CD4-positive, alpha-beta T cell (primary cell): ENCODE measurements at regions of chr7 and their contacts with region 1.

Region 1: GRCh38 chr7:93231799-93232672 is at the start of gene VPS50:
- DNase-seq: peak; percentile 84 to 97 (median 88)
- ATAC-seq: peak; percentile 94
- H3K4me3 ChIP-seq: peak within 1 kb of the TSS; percentile 67
- H3K4me3 Mint-ChIP-seq: peak within 1 kb of the TSS; percentile 96
- H3K27ac ChIP-seq: peak within 1 kb of the TSS; percentile 79 to 91
- H3K27ac Mint-ChIP-seq: peak within 1 kb of the TSS; percentile 95
- H3K4me1 ChIP-seq: peaks cover 6% of the 10 kb centered on the region
- H3K4me1 Mint-ChIP-seq: peaks cover 25% of the 10 kb centered on the region
- H3K27me3 ChIP-seq: no peaks in the 10 kb centered on the region
- H3K27me3 Mint-ChIP-seq: no peaks in the 10 kb centered on the region
- CTCF ChIP-seq: no peak
- total RNA-seq, gene VPS50: 13.2 to 17.3 TPM

Region 2: DNA sequence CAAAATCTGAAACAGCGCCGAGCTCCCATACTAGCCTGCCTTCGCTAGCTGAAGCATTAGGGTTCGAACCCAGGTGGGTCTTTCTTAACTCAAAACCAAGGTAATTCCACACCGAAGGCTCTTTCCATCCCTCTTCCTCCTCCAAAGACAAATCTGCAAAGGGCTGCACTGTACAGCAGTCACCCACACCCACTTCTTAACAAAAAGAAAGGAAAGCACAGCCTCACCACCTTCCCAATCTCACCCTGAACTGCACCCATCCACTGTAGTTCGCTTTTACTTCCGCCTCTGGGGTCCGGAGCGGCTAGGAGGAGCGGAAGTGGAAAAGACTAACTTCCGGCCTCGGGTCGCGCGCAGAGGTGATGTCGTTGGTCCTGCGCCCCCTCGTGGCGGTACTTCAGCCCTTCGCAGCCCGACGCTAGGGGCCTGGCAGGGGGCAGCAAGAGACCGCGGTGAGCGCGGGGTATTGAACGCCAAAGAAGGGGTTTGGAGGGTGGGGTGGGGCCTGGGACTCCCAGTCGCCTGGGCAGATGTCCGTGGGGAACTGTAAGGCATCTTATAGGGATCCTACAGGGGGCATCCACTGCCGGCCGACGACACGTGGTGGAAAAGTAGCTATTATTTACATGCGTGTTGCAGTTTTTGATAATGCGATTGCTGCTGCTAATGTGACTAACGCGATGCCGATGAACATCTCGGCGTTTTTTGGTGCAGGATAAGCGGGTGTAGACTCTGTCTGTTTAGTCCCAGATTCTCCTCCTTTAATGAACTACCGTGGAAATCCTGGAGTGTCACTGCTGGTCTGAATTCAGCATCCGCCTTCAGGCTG is 1351.4 kb before region 1 on chr7 and contains the start of gene MTERF1:
- CTCF ChIA-PET with region 1: no interaction called
- POLR2A ChIA-PET with region 1: no interaction called
- intact Hi-C with region 1: loop called in 1 of 2 experiments (anchors 10 kb)
- DNase-seq: peak; percentile 88 to 97 (median 92)
- ATAC-seq: peak; percentile 95
- H3K4me3 ChIP-seq: peak within 1 kb of the TSS; percentile 78
- H3K4me3 Mint-ChIP-seq: peak within 1 kb of the TSS; percentile 96
- H3K27ac ChIP-seq: peak within 1 kb of the TSS; percentile 26 to 64
- H3K27ac Mint-ChIP-seq: peak within 1 kb of the TSS; percentile 87
- H3K4me1 ChIP-seq: peaks cover 20% of the 10 kb centered on the region
- H3K4me1 Mint-ChIP-seq: peaks cover 41% of the 10 kb centered on the region
- H3K27me3 ChIP-seq: no peaks in the 10 kb centered on the region
- H3K27me3 Mint-ChIP-seq: no peaks in the 10 kb centered on the region
- CTCF ChIP-seq: peak; percentile 98
- total RNA-seq, gene MTERF1: 11.0 to 11.9 TPM

Region 3: GRCh38 chr7:92245487-92246362 is 986.3 kb before region 1 on chr7 and contains the starts of genes ANKIB1 and KRIT1:
- CTCF ChIA-PET with region 1: no interaction called
- POLR2A ChIA-PET with region 1: interaction called, 9 read pairs
- intact Hi-C with region 1: loop called in 1 of 2 experiments (anchors 10 kb)
- DNase-seq: peak; percentile 76 to 93 (median 81)
- ATAC-seq: peak; percentile 78
- H3K4me3 ChIP-seq: peak within 1 kb of the TSS; percentile 87
- H3K4me3 Mint-ChIP-seq: peak within 1 kb of the TSS; percentile 97
- H3K27ac ChIP-seq: peak within 1 kb of the TSS; percentile 86 to 96
- H3K27ac Mint-ChIP-seq: peak within 1 kb of the TSS; percentile 99
- H3K4me1 ChIP-seq: peaks cover 17% of the 10 kb centered on the region
- H3K4me1 Mint-ChIP-seq: peaks cover 61% of the 10 kb centered on the region
- H3K27me3 ChIP-seq: no peaks in the 10 kb centered on the region
- H3K27me3 Mint-ChIP-seq: no peaks in the 10 kb centered on the region
- CTCF ChIP-seq: no peak
- total RNA-seq, gene ANKIB1: 60.0 to 66.9 TPM
- total RNA-seq, gene KRIT1: 28.6 to 28.7 TPM

Region 4: GRCh38 chr7:92534572-92534971 is 697.5 kb before region 1 on chr7:
- CTCF ChIA-PET with region 1: no interaction called
- POLR2A ChIA-PET with region 1: no interaction called
- intact Hi-C with region 1: loop called in 1 of 2 experiments (anchors 5 kb)
- DNase-seq: no peak
- ATAC-seq: no peak
- H3K4me3 ChIP-seq: no peak overlapping the region
- H3K4me3 Mint-ChIP-seq: no peak overlapping the region
- H3K27ac ChIP-seq: no peak overlapping the region
- H3K27ac Mint-ChIP-seq: no peak overlapping the region
- H3K4me1 ChIP-seq: peaks cover 8% of the 10 kb centered on the region
- H3K4me1 Mint-ChIP-seq: peaks cover 47% of the 10 kb centered on the region
- H3K27me3 ChIP-seq: no peaks in the 10 kb centered on the region
- H3K27me3 Mint-ChIP-seq: no peaks in the 10 kb centered on the region
- CTCF ChIP-seq: no peak

Region 5: GRCh38 chr7:92590711-92591310 is 641.2 kb before region 1 on chr7:
- CTCF ChIA-PET with region 1: no interaction called
- POLR2A ChIA-PET with region 1: no interaction called
- intact Hi-C with region 1: loop called (anchors 1 to 5 kb)
- DNase-seq: peak in 3 of 14 experiments; percentile 6 to 24 (median 7)
- ATAC-seq: no peak
- H3K4me3 ChIP-seq: peak overlapping the region; percentile 85
- H3K4me3 Mint-ChIP-seq: peak overlapping the region; percentile 91
- H3K27ac ChIP-seq: no peak overlapping the region
- H3K27ac Mint-ChIP-seq: peak overlapping the region; percentile 95
- H3K4me1 ChIP-seq: peaks cover 30% of the 10 kb centered on the region
- H3K4me1 Mint-ChIP-seq: peaks cover 52% of the 10 kb centered on the region
- H3K27me3 ChIP-seq: no peaks in the 10 kb centered on the region
- H3K27me3 Mint-ChIP-seq: no peaks in the 10 kb centered on the region
- CTCF ChIP-seq: no peak

Region 6: GRCh38 chr7:94004024-94004951 is 772.3 kb after region 1 on chr7 and contains the start of gene BET1:
- CTCF ChIA-PET with region 1: no interaction called
- POLR2A ChIA-PET with region 1: no interaction called
- intact Hi-C with region 1: loop called (anchors 5 kb)
- DNase-seq: peak; percentile 84 to 98 (median 90)
- ATAC-seq: peak; percentile 95
- H3K4me3 ChIP-seq: peak within 1 kb of the TSS; percentile 75
- H3K4me3 Mint-ChIP-seq: peak within 1 kb of the TSS; percentile 99
- H3K27ac ChIP-seq: peak within 1 kb of the TSS; percentile 76 to 78
- H3K27ac Mint-ChIP-seq: peak within 1 kb of the TSS; percentile 99
- H3K4me1 ChIP-seq: peaks cover 14% of the 10 kb centered on the region
- H3K4me1 Mint-ChIP-seq: peaks cover 53% of the 10 kb centered on the region
- H3K27me3 ChIP-seq: no peaks in the 10 kb centered on the region
- H3K27me3 Mint-ChIP-seq: peaks cover 18% of the 10 kb centered on the region
- CTCF ChIP-seq: no peak
- total RNA-seq, gene BET1: 7.4 to 9.5 TPM

Region 7: GRCh38 chr7:94666879-94667587 is 1435.0 kb after region 1 on chr7:
- CTCF ChIA-PET with region 1: no interaction called
- POLR2A ChIA-PET with region 1: no interaction called
- intact Hi-C with region 1: loop called in 1 of 2 experiments (anchors 10 kb)
- DNase-seq: no peak
- ATAC-seq: no peak
- H3K4me3 ChIP-seq: no peak overlapping the region
- H3K4me3 Mint-ChIP-seq: no peak overlapping the region
- H3K27ac ChIP-seq: no peak overlapping the region
- H3K27ac Mint-ChIP-seq: no peak overlapping the region
- H3K4me1 ChIP-seq: no peaks in the 10 kb centered on the region
- H3K4me1 Mint-ChIP-seq: no peaks in the 10 kb centered on the region
- H3K27me3 ChIP-seq: no peaks in the 10 kb centered on the region
- H3K27me3 Mint-ChIP-seq: peaks cover 14% of the 10 kb centered on the region
- CTCF ChIP-seq: no peak